Activated CD8-positive, alpha-beta memory T cell treated with anti-CD3 and anti-CD28 coated beads, Interleukin-2, amount 10 ng/mL, durations not matched to agents 7 days and 5 days (primary cell): ENCODE measurements at regions of chr17 and their contacts with region 1.

Region 1: GRCh38 chr17:64648234-64648633 is 13.9 kb downstream of the SMURF2 start:
- DNase-seq: no peak
- ATAC-seq: no peak
- H3K4me3 Mint-ChIP-seq: no peak overlapping the region
- H3K27ac Mint-ChIP-seq: no peak overlapping the region
- H3K4me1 Mint-ChIP-seq: peaks cover 45% of the 10 kb centered on the region
- H3K27me3 Mint-ChIP-seq: no peaks in the 10 kb centered on the region

Region 2: GRCh38 chr17:64479650-64480049 is 168.6 kb before region 1 on chr17:
- CTCF ChIA-PET with region 1: no interaction called
- DNase-seq: no peak
- ATAC-seq: no peak
- H3K4me3 Mint-ChIP-seq: no peak overlapping the region
- H3K27ac Mint-ChIP-seq: no peak overlapping the region
- H3K4me1 Mint-ChIP-seq: peaks cover 8% of the 10 kb centered on the region
- H3K27me3 Mint-ChIP-seq: no peaks in the 10 kb centered on the region

Region 3: GRCh38 chr17:64736804-64737492 is 88.7 kb after region 1 on chr17:
- CTCF ChIA-PET with region 1: interaction called, 15 read pairs
- DNase-seq: peak; percentile 80
- ATAC-seq: peak; percentile 90
- H3K4me3 Mint-ChIP-seq: no peak overlapping the region
- H3K27ac Mint-ChIP-seq: no peak overlapping the region
- H3K4me1 Mint-ChIP-seq: peaks cover 17% of the 10 kb centered on the region
- H3K27me3 Mint-ChIP-seq: no peaks in the 10 kb centered on the region

Region 4: GRCh38 chr17:64765191-64765958 is 117.1 kb after region 1 on chr17:
- CTCF ChIA-PET with region 1: no interaction called
- DNase-seq: no peak
- ATAC-seq: no peak
- H3K4me3 Mint-ChIP-seq: no peak overlapping the region
- H3K27ac Mint-ChIP-seq: no peak overlapping the region
- H3K4me1 Mint-ChIP-seq: peaks cover 4% of the 10 kb centered on the region
- H3K27me3 Mint-ChIP-seq: no peaks in the 10 kb centered on the region